Posterior vena cava (tissue), 2 donors: ENCODE measurements at regions of chr7 and their contacts with region 1.

Region 1: GRCh38 chr7:154353355-154353767 is 301.2 kb downstream of the DPP6 start:
- DNase-seq: no peak

Region 2: GRCh38 chr7:154827007-154827406 is 473.6 kb after region 1 on chr7:
- intact Hi-C with region 1: loop called in 1 of 2 experiments (anchors 5 kb)
- DNase-seq: no peak